Activated naive CD4-positive, alpha-beta T cell treated with anti-CD3 and anti-CD28 coated beads, Interleukin-2, amount 10 ng/mL, durations not matched to agents 7 days and 5 days (primary cell): ENCODE measurements at regions of chr21 and their contacts with region 1.

Region 1: DNA sequence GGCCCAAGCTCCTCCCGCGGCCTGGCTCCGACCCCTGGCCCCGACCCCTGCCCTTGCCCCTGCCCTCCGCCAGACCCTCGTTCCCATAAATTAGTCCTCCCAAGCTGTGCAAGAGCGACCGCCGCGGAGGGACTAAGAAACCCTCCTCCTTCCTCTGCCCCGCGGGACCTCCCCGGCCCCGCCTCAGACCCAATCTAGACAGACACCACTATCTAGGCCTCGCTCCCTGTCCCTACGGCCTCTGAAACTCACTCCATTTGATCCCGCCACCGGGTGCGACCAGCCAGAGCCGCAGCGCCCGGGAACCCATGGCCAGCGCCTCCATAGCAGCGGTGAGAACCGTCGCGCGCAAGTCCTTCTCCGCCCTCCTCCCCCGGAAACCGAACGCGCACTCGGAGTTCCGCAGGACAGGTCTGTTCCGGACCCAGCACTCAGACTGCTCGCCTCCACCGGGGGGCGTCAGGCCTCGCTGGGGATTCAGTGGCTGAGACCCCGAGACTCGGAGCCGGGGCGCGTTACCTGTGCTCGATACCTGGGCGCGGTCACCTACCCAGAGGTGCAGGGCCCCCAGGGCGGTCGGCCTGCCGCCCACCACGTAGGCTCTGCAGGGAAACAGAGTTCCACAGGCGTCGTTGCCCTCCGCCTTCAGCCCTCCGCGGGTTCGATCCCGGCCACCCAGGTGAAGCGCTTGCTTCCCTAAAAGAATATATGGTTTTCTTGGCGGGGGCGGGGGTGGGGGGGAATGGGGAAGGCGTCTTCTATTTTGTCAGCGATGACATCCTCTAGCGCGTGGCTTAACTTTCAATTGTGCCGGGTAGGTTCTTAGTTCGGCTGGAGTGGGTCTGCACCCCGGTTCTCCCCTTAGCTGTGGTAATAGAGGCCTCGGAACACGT is at the start of gene MRPL39:
- DNase-seq: peak; percentile 92
- H3K4me3 Mint-ChIP-seq: peak within 1 kb of the TSS; percentile 99
- H3K27ac Mint-ChIP-seq: peak within 1 kb of the TSS; percentile 96
- H3K4me1 Mint-ChIP-seq: peaks cover 34% of the 10 kb centered on the region
- H3K27me3 Mint-ChIP-seq: no peaks in the 10 kb centered on the region

Region 2: DNA sequence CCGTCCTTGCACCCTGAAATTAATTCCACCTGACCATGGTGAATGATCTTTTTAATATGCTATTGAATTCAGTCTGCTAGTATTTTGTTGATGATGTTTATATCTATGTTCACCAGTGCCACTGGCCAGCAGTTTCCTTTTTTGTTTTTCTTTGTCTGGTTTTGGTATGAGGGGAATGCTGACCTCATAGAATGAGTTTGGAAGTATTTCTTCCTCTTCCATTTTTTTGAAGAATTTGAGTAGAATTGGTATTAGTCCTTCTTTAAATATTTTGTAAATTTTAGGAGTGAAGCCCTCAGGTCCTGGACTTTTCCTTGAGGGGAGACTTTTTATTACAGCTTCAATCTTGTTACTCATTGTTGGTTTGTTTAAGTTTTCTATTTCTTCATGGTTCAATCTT is 231.7 kb before region 1 on chr21:
- CTCF ChIA-PET with region 1: no interaction called
- DNase-seq: no peak
- H3K4me3 Mint-ChIP-seq: no peak overlapping the region
- H3K27ac Mint-ChIP-seq: no peak overlapping the region
- H3K4me1 Mint-ChIP-seq: peaks cover 9% of the 10 kb centered on the region
- H3K27me3 Mint-ChIP-seq: peaks cover 7% of the 10 kb centered on the region

Region 3: DNA sequence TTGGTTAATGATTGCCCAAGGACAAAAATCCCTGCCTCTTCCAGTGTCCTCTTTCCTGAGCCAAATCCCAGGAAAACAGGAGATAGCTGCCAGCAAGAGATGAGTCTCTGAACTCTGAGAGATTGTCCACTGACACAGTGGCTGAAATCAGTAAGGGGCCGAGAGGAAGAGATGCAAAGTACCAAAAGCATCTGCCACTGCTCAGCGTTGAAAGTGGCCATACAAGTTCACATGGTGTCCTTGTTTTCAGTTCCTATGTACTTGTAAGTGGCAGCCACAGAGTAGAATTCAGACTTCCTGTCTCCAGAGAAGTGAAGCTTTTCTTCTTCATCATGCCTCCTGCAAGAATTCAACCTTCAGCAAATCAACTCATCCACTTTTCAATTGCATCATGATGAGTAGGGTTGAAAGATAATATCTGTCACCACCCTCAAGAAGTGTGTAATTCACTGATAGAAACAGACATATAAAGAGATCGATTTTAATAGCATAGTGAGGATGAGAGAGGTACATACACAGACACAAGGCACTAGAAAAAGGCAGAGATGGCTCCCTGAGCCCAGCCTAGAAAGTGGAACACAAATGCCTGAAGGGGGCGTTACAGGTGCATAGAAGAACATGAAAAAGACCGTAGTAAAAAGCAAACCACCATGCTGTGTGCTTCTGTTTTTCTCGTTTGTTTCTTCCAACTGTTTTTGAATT is 185.9 kb before region 1 on chr21:
- CTCF ChIA-PET with region 1: interaction called, 28 read pairs
- DNase-seq: peak; percentile 60
- H3K4me3 Mint-ChIP-seq: peak overlapping the region; percentile 24
- H3K27ac Mint-ChIP-seq: peak overlapping the region; percentile 57
- H3K4me1 Mint-ChIP-seq: peaks cover 14% of the 10 kb centered on the region
- H3K27me3 Mint-ChIP-seq: no peaks in the 10 kb centered on the region

Region 4: DNA sequence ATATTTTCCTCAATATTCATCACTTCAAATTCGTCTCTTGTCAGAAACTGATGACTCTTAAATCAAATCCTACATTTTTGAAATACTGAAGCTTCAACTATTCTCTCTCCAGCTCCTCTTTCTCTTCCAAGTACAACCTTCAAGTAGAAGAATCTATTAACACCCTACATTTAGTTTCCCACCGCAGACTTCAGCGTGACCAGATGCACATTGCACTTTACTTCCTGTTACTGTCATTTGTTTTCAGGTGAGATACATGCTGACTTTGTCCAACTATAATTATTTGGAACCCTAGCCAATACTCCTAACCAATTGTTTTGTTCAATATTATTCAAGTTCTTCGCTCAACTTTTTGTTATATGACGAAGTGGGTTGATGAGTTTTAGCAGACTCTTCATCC is 116.1 kb before region 1 on chr21:
- CTCF ChIA-PET with region 1: no interaction called
- DNase-seq: no peak
- H3K4me3 Mint-ChIP-seq: no peak overlapping the region
- H3K27ac Mint-ChIP-seq: no peak overlapping the region
- H3K4me1 Mint-ChIP-seq: peaks cover 15% of the 10 kb centered on the region
- H3K27me3 Mint-ChIP-seq: no peaks in the 10 kb centered on the region

Region 5: GRCh38 chr21:25708467-25709065 is 101.2 kb after region 1 on chr21:
- CTCF ChIA-PET with region 1: interaction called, 28 read pairs
- DNase-seq: peak; percentile 59
- H3K4me3 Mint-ChIP-seq: no peak overlapping the region
- H3K27ac Mint-ChIP-seq: no peak overlapping the region
- H3K4me1 Mint-ChIP-seq: no peaks in the 10 kb centered on the region
- H3K27me3 Mint-ChIP-seq: no peaks in the 10 kb centered on the region

Region 6: GRCh38 chr21:25734904-25735645 is 127.7 kb after region 1 on chr21 and contains the starts of genes ATP5PF and GABPA:
- CTCF ChIA-PET with region 1: interaction called, 10 read pairs
- DNase-seq: peak; percentile 98
- H3K4me3 Mint-ChIP-seq: peak within 1 kb of the TSS; percentile 97
- H3K27ac Mint-ChIP-seq: peak within 1 kb of the TSS; percentile 100
- H3K4me1 Mint-ChIP-seq: peaks cover 45% of the 10 kb centered on the region
- H3K27me3 Mint-ChIP-seq: peaks cover 5% of the 10 kb centered on the region

Region 7: GRCh38 chr21:25801217-25802014 is 194.0 kb after region 1 on chr21:
- CTCF ChIA-PET with region 1: interaction called, 14 read pairs
- DNase-seq: peak; percentile 92
- H3K4me3 Mint-ChIP-seq: no peak overlapping the region
- H3K27ac Mint-ChIP-seq: no peak overlapping the region
- H3K4me1 Mint-ChIP-seq: peaks cover 5% of the 10 kb centered on the region
- H3K27me3 Mint-ChIP-seq: peaks cover 27% of the 10 kb centered on the region

Region 8: GRCh38 chr21:26432410-26432809 is 825.0 kb after region 1 on chr21:
- CTCF ChIA-PET with region 1: no interaction called
- DNase-seq: no peak
- H3K4me3 Mint-ChIP-seq: no peak overlapping the region
- H3K27ac Mint-ChIP-seq: no peak overlapping the region
- H3K4me1 Mint-ChIP-seq: no peaks in the 10 kb centered on the region
- H3K27me3 Mint-ChIP-seq: no peaks in the 10 kb centered on the region